ENCODE measurements at regions of chr5 and their contacts with region 1.

Region 1: GRCh38 chr5:1799602-1800471 is at the start of gene MRPL36:
- DNase-seq: peak; percentile 79 to 92 (median 87)
- ATAC-seq: peak; percentile 84
- H3K4me3 ChIP-seq: peak within 1 kb of the TSS; percentile 63
- H3K4me3 Mint-ChIP-seq: peak within 1 kb of the TSS; percentile 93 to 100 (median 99)
- H3K27ac ChIP-seq: peak within 1 kb of the TSS; percentile 88
- H3K27ac Mint-ChIP-seq: peak within 1 kb of the TSS; percentile 95 to 100 (median 99)
- H3K4me1 ChIP-seq: peaks cover 12 to 13% of the 10 kb centered on the region in 2 donors
- H3K4me1 Mint-ChIP-seq: peaks cover 41 to 69% (median 60%) of the 10 kb centered on the region in 7 donors
- H3K27me3 ChIP-seq: no peaks in the 10 kb centered on the region
- H3K27me3 Mint-ChIP-seq: no peaks in the 10 kb centered on the region
- total RNA-seq, gene MRPL36: 14.1 to 52.6 (median 26.8) TPM

Region 2: GRCh38 chr5:776792-777711 is 1022.8 kb before region 1 on chr5:
- CTCF ChIA-PET with region 1: no interaction called
- POLR2A ChIA-PET with region 1: no interaction called
- intact Hi-C with region 1: loop called in 1 of 2 experiments (anchors 10 kb)
- DNase-seq: no peak
- ATAC-seq: no peak
- H3K4me3 ChIP-seq: no peak overlapping the region
- H3K4me3 Mint-ChIP-seq: no peak overlapping the region
- H3K27ac ChIP-seq: no peak overlapping the region
- H3K27ac Mint-ChIP-seq: no peak overlapping the region
- H3K4me1 ChIP-seq: no peaks in the 10 kb centered on the region
- H3K4me1 Mint-ChIP-seq: no peaks in the 10 kb centered on the region
- H3K27me3 ChIP-seq: no peaks in the 10 kb centered on the region
- H3K27me3 Mint-ChIP-seq: peaks cover 0 to 4% (median 0%) of the 10 kb centered on the region in 5 donors

Region 3: DNA sequence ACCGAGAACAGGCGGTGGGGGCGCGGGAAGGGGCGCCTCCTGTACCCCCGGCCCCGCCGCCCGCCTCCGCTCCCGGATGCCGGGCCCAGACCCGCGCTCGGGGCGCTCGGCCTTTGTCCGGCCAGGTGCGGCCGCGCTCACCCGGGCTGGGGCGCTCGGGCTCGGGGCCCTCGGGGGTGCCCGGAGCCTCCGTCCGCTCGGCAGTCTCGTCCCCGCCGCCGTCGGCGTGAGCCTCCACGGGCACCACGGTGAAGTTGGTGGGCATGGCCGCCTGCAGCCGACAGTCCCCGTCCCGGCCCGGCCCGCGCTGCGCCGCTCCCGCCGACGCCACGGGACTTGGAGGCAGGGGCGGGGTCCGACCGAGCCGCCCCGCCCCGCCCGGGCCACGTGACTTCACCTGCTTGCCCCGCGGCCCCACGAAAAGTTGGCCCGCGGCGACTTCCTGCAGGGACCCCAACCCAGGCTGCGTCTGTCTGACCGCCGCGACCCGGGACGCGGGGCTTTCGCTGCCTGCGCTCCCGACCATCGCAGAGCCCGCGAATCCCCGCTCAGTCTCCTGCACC is 688.0 kb before region 1 on chr5 and contains the start of gene SLC12A7:
- CTCF ChIA-PET with region 1: no interaction called
- POLR2A ChIA-PET with region 1: no interaction called
- intact Hi-C with region 1: loop called (anchors 2 to 5 kb)
- DNase-seq: peak; percentile 43 to 80 (median 58)
- ATAC-seq: peak; percentile 74
- H3K4me3 ChIP-seq: peak within 1 kb of the TSS; percentile 61
- H3K4me3 Mint-ChIP-seq: peak within 1 kb of the TSS; percentile 87 to 93 (median 88)
- H3K27ac ChIP-seq: peak within 1 kb of the TSS; percentile 83
- H3K27ac Mint-ChIP-seq: peak within 1 kb of the TSS; percentile 73 to 92 (median 86)
- H3K4me1 ChIP-seq: peaks cover 5 to 30% of the 10 kb centered on the region in 2 donors
- H3K4me1 Mint-ChIP-seq: peaks cover 20 to 41% (median 35%) of the 10 kb centered on the region in 7 donors
- H3K27me3 ChIP-seq: no peaks in the 10 kb centered on the region
- H3K27me3 Mint-ChIP-seq: no peaks in the 10 kb centered on the region
- total RNA-seq, gene SLC12A7: 45.3 to 101 (median 64.5) TPM

Region 4: GRCh38 chr5:1523771-1524480 is 275.9 kb before region 1 on chr5 and contains the start of gene LPCAT1:
- CTCF ChIA-PET with region 1: no interaction called
- POLR2A ChIA-PET with region 1: no interaction called
- intact Hi-C with region 1: loop called in 1 of 2 experiments (anchors 5 kb)
- DNase-seq: peak; percentile 44 to 91 (median 71)
- ATAC-seq: peak; percentile 93
- H3K4me3 ChIP-seq: peak within 1 kb of the TSS; percentile 61
- H3K4me3 Mint-ChIP-seq: peak within 1 kb of the TSS; percentile 73 to 89 (median 83)
- H3K27ac ChIP-seq: peak within 1 kb of the TSS; percentile 81
- H3K27ac Mint-ChIP-seq: peak within 1 kb of the TSS in 6 of 9 donors; percentile 33 to 77 (median 69)
- H3K4me1 ChIP-seq: peaks cover 13 to 31% of the 10 kb centered on the region in 2 donors
- H3K4me1 Mint-ChIP-seq: peaks cover 13 to 30% (median 19%) of the 10 kb centered on the region in 7 donors
- H3K27me3 ChIP-seq: no peaks in the 10 kb centered on the region
- H3K27me3 Mint-ChIP-seq: peaks cover 0 to 8% (median 0%) of the 10 kb centered on the region in 5 donors
- total RNA-seq, gene LPCAT1: 29.4 to 89.4 (median 49.7) TPM

Region 5: DNA sequence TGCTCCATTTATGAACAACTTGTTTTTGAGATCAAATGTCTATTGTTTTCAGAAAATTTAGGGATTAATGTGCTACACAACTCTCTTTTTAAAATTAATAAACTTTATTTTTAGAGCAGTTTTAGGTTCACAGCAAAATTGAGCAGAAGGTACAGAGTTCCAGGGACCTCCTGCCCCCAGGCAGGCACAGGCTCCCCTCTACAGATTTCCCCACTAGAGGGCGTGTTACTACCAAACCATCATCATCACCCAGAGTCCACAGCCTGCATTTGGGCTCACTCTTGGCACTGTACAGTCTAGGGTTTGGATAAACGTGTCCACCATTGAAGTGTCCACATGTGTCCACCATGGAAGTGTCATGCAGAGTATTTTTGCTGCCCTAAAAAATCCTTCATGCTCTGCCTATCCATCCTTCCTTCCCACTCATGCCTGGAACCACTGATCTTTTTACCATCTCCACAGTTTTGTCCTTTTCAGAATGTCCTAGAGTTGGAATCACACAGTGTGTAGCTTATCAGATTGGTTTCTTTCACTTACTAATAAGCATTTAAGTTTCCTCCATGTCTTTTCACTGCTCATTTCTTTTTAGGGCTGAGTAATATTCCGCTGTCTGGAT is 61.9 kb before region 1 on chr5:
- CTCF ChIA-PET with region 1: interaction called, 3 read pairs
- POLR2A ChIA-PET with region 1: interaction called, 3 read pairs
- intact Hi-C with region 1: loop called in 1 of 2 experiments (anchors 2 kb)
- DNase-seq: peak in 7 of 9 donors; percentile 15 to 64 (median 48)
- ATAC-seq: peak; percentile 64
- H3K4me3 ChIP-seq: no peak overlapping the region
- H3K4me3 Mint-ChIP-seq: no peak overlapping the region
- H3K27ac ChIP-seq: no peak overlapping the region
- H3K27ac Mint-ChIP-seq: peak overlapping the region in 1 of 9 donors; percentile 53
- H3K4me1 ChIP-seq: no peaks in the 10 kb centered on the region
- H3K4me1 Mint-ChIP-seq: no peaks in the 10 kb centered on the region
- H3K27me3 ChIP-seq: no peaks in the 10 kb centered on the region
- H3K27me3 Mint-ChIP-seq: peaks cover 19 to 38% (median 31%) of the 10 kb centered on the region in 5 donors

Region 6: GRCh38 chr5:1917832-1918487 is 118.1 kb after region 1 on chr5:
- CTCF ChIA-PET with region 1: no interaction called
- POLR2A ChIA-PET with region 1: no interaction called
- intact Hi-C with region 1: no loop called
- DNase-seq: no peak
- ATAC-seq: no peak
- H3K4me3 ChIP-seq: no peak overlapping the region
- H3K4me3 Mint-ChIP-seq: no peak overlapping the region
- H3K27ac ChIP-seq: no peak overlapping the region
- H3K27ac Mint-ChIP-seq: no peak overlapping the region
- H3K4me1 ChIP-seq: no peaks in the 10 kb centered on the region
- H3K4me1 Mint-ChIP-seq: peaks cover 0 to 1% (median 0%) of the 10 kb centered on the region in 7 donors
- H3K27me3 ChIP-seq: no peaks in the 10 kb centered on the region
- H3K27me3 Mint-ChIP-seq: peaks cover 0 to 18% (median 16%) of the 10 kb centered on the region in 5 donors

Region 7: GRCh38 chr5:2038321-2039179 is 238.7 kb after region 1 on chr5:
- CTCF ChIA-PET with region 1: no interaction called
- POLR2A ChIA-PET with region 1: no interaction called
- intact Hi-C with region 1: no loop called
- DNase-seq: peak; percentile 26 to 73 (median 58)
- ATAC-seq: peak; percentile 87
- H3K4me3 ChIP-seq: peak overlapping the region; percentile 42
- H3K4me3 Mint-ChIP-seq: peak overlapping the region; percentile 44 to 77 (median 71)
- H3K27ac ChIP-seq: no peak overlapping the region
- H3K27ac Mint-ChIP-seq: no peak overlapping the region
- H3K4me1 ChIP-seq: no peaks in the 10 kb centered on the region
- H3K4me1 Mint-ChIP-seq: no peaks in the 10 kb centered on the region
- H3K27me3 ChIP-seq: peaks cover 0 to 8% of the 10 kb centered on the region in 2 donors
- H3K27me3 Mint-ChIP-seq: peaks cover 20 to 73% (median 53%) of the 10 kb centered on the region in 5 donors

Measured in naive thymus-derived CD4-positive, alpha-beta T cell (primary cell).